ENCODE measurements at regions of chr5 and their contacts with region 1.

Region 1: DNA sequence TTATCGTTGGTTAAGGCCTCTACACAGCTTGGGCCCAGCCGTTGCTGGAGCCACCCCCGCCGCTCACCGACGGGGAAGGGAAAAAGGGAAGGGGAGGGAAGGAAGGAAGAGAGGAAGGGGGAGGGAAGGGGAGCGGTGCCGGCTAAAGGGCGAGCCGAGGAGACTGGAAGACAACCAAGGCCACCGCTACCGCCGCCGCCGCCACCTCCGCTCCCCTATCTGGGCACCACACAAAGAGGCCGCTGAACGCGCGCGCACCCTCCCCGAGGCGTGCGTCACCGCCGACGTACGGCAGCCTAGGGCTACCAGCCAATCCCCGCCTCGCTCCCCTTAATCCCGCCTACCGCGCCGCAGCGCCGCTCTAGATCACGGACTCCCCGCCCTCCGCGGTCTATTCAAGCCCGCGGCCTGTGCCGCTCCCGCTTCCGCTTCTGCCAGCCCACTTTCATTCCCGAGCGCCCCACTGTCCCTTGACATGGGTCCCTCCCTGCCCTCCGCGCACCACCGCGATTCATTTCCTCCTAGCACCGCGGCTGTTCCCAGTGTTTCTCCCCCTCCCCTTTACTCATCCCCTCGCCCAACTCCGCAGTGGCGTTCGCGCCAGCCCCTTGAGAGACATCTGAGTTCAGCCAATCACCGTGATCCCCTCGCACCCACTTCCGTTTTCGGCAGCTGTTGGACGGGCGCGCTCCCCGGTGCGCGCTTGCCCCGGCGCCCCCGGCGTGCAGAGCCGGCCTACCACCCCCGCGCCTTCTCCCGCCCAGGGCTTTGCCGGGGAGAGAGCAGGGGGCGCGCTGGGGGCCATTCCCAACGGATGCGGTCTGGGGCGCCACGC is at the start of gene HNRNPA0:
- DNase-seq: peak; percentile 94
- H3K4me3 Mint-ChIP-seq: peak within 1 kb of the TSS; percentile 97
- H3K27ac Mint-ChIP-seq: peak within 1 kb of the TSS; percentile 100
- H3K4me1 Mint-ChIP-seq: peaks cover 22% of the 10 kb centered on the region
- H3K27me3 Mint-ChIP-seq: peaks cover 8% of the 10 kb centered on the region
- total RNA-seq, gene HNRNPA0: 37.5 and 37.8 TPM in 2 replicates

Region 2: DNA sequence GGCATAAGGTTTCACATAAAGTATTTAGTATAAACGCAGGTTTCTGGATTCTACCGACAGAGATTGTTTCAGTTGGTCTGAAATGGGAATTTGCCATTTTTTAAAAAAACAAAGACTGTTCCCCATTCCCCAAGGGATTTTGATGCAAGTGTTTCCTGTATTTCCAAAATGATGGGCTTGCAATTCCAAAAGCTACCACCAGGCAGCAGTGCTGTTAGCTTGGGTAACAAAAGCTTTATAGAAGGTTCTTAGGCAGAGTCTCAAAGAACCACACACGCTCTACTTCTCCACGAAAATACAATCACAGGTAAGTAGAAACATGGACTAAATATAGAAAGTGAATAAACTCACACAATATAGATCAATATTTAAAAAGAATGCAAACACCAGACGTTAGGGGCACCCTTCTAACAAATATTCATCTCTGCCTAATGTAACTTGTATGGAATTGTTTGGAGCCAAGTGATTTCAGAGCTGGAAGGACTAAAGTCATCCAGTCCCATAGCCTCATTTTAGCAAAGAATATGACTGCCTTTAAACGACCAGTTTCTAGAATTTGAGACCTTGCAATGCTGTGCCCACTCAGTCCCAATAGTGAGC is 409.5 kb before region 1 on chr5:
- intact Hi-C with region 1: no loop called
- DNase-seq: no peak
- H3K4me3 Mint-ChIP-seq: no peak overlapping the region
- H3K27ac Mint-ChIP-seq: no peak overlapping the region
- H3K4me1 Mint-ChIP-seq: no peaks in the 10 kb centered on the region
- H3K27me3 Mint-ChIP-seq: peaks cover 2% of the 10 kb centered on the region

Region 3: DNA sequence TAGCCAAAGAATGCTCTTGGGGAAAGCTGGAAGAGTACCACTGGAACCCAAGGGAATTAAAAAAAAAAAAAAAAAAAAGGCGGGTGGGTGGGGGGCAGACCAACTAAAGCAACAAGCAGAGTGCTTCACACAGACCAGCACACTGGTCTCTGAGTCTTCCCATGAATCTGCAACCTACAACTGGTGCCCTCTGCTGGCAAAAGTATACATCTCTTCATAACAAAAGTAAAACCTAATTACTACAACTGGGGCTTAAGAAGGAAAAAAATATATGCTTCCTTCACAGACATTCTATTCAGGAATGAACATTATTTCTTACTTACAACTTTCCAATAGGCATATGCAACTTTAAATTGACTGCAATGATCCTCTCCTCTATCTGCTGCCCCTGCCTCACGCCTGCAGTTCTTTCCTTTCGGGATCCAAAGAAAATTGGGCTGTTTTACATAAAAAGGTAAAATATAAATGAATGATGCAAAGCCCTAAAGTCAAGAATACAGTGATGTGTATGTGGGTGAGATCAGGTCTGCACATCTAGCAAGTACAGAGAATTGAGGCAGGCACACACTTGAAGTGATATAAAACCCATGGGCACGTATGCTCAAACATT is 11.2 kb before region 1 on chr5:
- intact Hi-C with region 1: loop called (anchors 1 kb)
- DNase-seq: peak; percentile 54
- H3K4me3 Mint-ChIP-seq: no peak overlapping the region
- H3K27ac Mint-ChIP-seq: no peak overlapping the region
- H3K4me1 Mint-ChIP-seq: no peaks in the 10 kb centered on the region
- H3K27me3 Mint-ChIP-seq: peaks cover 2% of the 10 kb centered on the region

Region 4: DNA sequence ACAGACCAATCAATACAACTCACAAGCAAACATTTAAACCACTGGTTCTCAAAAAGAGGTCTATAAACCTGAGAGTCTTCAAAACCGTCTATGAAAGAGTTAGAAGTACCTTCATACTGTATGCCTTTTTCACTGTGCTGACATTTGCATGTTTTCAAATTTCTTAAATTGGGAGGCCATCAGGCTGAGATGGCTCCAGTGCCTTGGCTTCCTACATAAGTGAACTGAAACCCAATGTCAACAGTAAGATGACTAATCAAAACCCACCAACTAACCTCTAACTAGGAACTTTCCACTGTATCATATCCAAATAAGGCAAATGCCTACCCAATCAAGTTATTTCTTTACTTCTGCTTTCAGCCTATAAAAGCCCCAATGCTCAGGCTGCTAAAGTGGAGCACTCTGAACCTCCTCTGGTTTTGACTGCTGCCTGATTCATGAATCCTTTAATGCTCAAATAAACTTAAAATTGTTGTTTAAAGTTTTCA is 243.4 kb after region 1 on chr5:
- intact Hi-C with region 1: loop called (anchors 2 kb)
- DNase-seq: no peak
- H3K4me3 Mint-ChIP-seq: no peak overlapping the region
- H3K27ac Mint-ChIP-seq: peak overlapping the region; percentile 79
- H3K4me1 Mint-ChIP-seq: peaks cover 47% of the 10 kb centered on the region
- H3K27me3 Mint-ChIP-seq: no peaks in the 10 kb centered on the region

Region 5: DNA sequence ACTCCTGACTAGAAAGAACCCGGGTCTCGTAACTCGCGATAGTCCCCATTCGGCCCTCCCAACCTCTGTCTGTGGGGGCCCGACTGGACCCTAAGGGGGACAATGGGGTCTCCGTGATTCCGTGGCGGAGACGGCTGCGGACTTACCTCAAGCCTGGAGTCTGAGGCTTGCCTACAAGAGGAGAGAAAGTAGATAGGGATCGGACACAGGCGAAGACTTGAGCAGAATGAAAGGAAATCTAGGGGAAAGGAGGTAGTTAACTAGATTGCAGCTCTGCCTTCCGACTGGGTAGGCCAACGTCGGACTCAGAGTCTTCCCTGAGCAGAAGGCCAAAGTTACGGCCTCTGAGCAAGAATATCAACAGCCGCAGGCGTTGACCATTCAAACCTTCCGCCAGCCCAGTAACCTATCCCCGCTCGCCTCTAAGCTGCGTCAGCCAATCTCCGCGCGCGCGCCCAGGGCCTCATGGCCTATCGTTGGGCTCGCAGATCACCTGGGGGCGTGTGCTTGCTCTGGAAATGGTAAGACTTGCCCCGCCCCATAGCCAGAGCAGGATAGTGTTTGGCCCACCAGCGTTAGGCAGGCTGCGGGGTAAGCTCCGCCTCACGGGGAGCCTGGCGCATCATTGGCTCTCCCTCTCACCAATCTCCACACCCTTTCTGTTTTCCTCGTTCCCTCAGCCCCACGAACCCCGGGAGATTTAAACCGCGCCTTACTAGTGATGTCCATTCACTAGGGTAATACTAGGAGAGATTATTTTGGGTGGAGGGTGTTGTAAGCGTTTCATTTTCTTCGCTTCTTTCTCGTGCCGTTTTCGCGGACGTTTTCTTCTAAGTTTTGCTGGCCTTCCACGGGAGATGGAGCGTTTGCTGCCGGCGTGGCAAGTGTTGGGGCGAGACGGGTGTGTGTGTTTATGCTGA is 577.4 kb after region 1 on chr5 and contains the start of gene CDC25C:
- intact Hi-C with region 1: loop called (anchors 1 kb)
- DNase-seq: peak; percentile 97
- H3K4me3 Mint-ChIP-seq: peak within 1 kb of the TSS; percentile 85
- H3K27ac Mint-ChIP-seq: peak within 1 kb of the TSS; percentile 82
- H3K4me1 Mint-ChIP-seq: peaks cover 24% of the 10 kb centered on the region
- H3K27me3 Mint-ChIP-seq: no peaks in the 10 kb centered on the region
- total RNA-seq, gene CDC25C: 5.3 and 5.6 TPM in 2 replicates

Region 6: DNA sequence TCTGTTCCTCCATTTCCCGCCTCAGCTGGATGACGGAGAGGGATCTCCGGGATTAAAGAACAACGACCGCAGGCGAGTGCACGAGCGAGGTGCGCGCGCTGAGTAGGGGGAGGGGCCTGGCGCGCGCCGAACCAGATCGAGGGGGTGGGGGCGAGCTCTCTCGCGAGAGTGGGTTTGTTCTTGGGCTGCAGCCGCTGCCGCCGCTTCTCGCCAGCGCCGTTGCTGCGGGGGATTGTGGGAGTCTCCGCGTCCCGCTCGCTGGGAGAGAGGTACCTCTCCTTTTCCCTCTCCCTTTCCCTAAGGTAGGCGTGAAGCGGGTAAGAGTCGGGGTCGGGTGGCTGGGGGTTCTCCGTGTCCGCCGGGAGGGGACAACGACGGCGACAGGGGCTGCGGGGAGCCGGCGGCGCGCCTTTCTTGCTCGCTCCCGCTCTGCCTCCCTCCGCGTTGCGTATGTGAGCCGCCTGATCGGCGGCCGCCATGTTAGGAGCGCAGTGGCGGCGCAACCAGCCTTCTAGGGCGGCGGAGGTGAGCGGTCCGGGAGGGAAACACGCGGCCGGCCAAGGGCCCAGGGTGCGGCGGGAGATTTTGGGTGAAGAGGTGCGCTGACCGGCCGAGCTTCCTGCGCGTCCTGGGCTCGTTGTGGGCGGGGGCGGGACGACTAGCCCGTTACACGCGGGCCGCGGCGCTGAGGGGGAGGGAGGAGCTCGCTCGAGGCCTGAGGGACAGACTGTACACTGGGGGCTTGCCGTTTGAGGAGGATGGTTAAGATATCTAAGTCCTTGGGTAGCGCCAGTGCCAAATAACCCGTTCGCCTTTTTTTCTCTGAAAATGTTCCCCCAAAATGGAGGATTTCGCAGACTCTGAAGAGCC is 1539.4 kb after region 1 on chr5 and contains the start of gene MATR3:
- intact Hi-C with region 1: loop called (anchors 10 kb)
- DNase-seq: peak; percentile 88
- H3K4me3 Mint-ChIP-seq: peak within 1 kb of the TSS; percentile 95
- H3K27ac Mint-ChIP-seq: peak within 1 kb of the TSS; percentile 94
- H3K4me1 Mint-ChIP-seq: peaks cover 37% of the 10 kb centered on the region
- H3K27me3 Mint-ChIP-seq: no peaks in the 10 kb centered on the region
- total RNA-seq, gene MATR3: 232 and 258 TPM in 2 replicates

Measured in activated T-helper 1 cell treated with anti-CD3 and anti-CD28 coated beads, Interleukin-12 subunit alpha, Interleukin-12 subunit beta, Interleukin-2, Interleukin-4 antibody, amounts not matched to agents 30 ng/mL and 10 ng/mL and 1 ng/mL, durations not matched to agents 14 hours and 24 hours and 36 hours (primary cell).